ENCODE measurements at regions of chr4 and their contacts with region 1.

Region 1: DNA sequence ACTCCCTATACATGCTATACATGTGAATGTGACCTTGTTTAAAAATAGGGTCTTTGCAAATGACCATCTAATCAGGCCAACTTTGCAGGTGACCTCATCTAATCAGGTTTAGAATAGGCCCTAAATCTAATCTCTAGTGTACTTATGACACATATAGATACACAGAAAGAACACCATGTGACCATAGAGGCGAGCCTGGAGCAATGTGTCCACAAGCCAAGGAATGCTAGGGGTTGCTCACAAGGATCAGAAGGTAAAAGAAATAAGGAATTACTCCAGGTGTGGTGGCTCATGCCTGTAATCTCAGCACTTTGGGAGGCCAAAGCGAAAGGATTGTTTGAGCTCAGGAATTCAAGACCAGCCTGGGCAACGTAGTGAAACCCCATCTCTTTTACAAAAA is 9.6 kb upstream of the C4orf36 start:
- DNase-seq: no peak
- H3K27ac ChIP-seq: no peak overlapping the region
- CTCF ChIP-seq: no peak

Region 2: GRCh38 chr4:86300518-86300917 is 601.3 kb before region 1 on chr4:
- CTCF ChIA-PET with region 1: no interaction called
- POLR2A ChIA-PET with region 1: interaction called, 15 read pairs
- DNase-seq: no peak
- H3K27ac ChIP-seq: no peak overlapping the region
- CTCF ChIP-seq: no peak

Region 3: DNA sequence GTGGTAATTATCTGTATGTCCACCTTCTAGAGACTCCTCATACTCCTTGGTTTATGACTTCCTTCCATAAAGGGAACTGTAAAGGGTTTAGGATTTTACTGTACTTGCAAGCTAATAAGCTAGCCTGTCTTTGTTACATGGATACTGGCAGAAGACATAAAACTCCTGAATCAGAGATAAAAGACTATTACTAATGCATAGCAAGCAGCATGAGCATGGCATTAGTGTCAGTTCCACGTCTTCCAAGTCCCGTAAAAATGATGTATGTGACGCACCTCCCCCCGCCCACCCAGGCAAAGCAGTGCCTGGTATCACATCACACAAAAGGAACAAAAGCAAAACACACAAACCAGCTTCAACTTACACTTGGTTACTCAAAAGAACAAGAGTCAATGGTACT is 123.7 kb before region 1 on chr4:
- CTCF ChIA-PET with region 1: no interaction called
- POLR2A ChIA-PET with region 1: no interaction called
- DNase-seq: no peak
- H3K27ac ChIP-seq: no peak overlapping the region
- CTCF ChIP-seq: no peak

Region 4: DNA sequence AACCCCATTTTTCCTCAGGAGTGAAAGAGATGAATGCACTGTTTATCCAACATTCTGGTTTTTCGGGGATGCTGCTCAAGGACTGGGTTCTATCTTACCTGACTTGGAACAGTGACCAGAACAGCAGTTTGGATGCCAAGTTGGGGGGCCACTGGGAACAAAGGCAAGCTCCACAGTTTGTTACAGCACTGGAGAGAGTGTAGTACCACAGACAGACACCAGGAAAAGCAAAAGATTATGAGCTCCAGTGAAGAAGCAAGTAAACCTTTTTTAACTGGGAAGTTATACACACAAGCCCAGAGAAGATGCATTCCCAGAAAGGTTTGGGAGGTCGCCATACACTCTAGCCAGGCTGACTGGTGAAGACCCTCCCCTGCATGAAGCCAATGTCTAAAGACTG is 23.2 kb before region 1 on chr4:
- CTCF ChIA-PET with region 1: no interaction called
- POLR2A ChIA-PET with region 1: no interaction called
- DNase-seq: no peak
- H3K27ac ChIP-seq: no peak overlapping the region
- CTCF ChIP-seq: no peak

Region 5: GRCh38 chr4:86972997-86973396 is 71.1 kb after region 1 on chr4:
- CTCF ChIA-PET with region 1: no interaction called
- POLR2A ChIA-PET with region 1: no interaction called
- DNase-seq: peak; percentile 55
- H3K27ac ChIP-seq: peak overlapping the region; percentile 46; the same call in 1 of the 2 replicates
- CTCF ChIP-seq: no peak

Region 6: GRCh38 chr4:87257523-87257922 is 355.7 kb after region 1 on chr4:
- CTCF ChIA-PET with region 1: no interaction called
- POLR2A ChIA-PET with region 1: no interaction called
- DNase-seq: no peak
- H3K27ac ChIP-seq: no peak overlapping the region
- CTCF ChIP-seq: no peak